ENCODE measurements at regions of chrX and their contacts with region 1.

Region 1: GRCh38 chrX:101028562-101028961 is 23.3 kb downstream of the TRMT2B start:
- DNase-seq: no peak
- ATAC-seq: no peak
- H3K4me3 Mint-ChIP-seq: no peak overlapping the region
- H3K27ac Mint-ChIP-seq: no peak overlapping the region
- H3K4me1 Mint-ChIP-seq: no peaks in the 10 kb centered on the region
- H3K27me3 Mint-ChIP-seq: no peaks in the 10 kb centered on the region
- CTCF ChIP-seq: no peak

Region 2: DNA sequence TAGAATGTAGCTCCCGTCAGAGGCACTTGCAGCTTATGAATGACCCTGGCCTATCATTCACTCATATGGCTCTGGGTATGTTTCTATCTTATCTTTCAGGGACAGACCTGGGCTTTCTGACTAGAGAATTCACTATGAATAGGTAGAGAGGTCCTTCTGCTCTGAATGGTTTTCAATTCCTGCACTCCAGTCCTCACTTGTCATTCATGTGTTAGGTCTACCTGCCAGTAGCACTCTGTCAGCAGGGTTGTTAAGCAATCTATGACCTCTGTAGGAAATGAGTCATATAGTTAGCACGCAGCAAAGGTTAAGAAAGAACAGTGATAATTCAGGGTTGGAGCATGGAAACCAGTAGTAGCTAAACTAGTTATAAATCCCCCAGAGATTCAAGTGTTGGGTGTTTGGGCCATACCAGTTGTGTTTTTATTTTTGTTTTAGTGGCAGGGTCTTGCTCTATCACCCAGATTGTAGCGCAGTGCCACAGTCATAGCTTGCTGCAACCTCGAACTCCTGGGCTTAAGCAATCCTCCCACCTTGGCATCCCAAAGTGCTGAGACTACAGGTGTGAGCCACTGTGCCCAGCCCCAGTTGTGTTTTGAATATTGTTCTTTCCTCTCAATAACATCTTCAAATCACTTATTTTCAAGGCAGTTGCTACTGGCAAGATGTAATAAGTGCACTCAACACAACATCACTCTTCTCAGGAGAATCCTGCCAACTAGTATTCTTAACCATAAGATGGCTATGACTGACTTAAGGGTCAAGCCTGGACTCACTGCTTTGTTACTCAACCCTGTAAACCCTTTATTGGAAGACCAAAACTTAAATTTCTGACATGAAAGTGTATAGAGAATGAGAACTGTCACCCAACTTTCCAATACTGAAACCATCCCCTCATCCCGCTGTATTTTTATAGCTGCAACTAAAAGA is 33.9 kb before region 1 on chrX:
- CTCF ChIA-PET with region 1: no interaction called
- POLR2A ChIA-PET with region 1: no interaction called
- intact Hi-C with region 1: loop called (anchors 5 kb)
- DNase-seq: no peak
- ATAC-seq: no peak
- H3K4me3 Mint-ChIP-seq: no peak overlapping the region
- H3K27ac Mint-ChIP-seq: no peak overlapping the region
- H3K4me1 Mint-ChIP-seq: peaks cover 5% of the 10 kb centered on the region
- H3K27me3 Mint-ChIP-seq: no peaks in the 10 kb centered on the region
- CTCF ChIP-seq: no peak